Pancreas (tissue), 10 donors: ENCODE measurements at regions of chr1 and their contacts with region 1.

Region 1: GRCh38 chr1:55284852-55285251 is 69.7 kb upstream of the USP24 start:
- DNase-seq: peak in 1 of 6 donors; percentile 18
- ATAC-seq: peak in 3 of 4 donors; percentile 55 to 76 (median 70)
- H3K4me3 ChIP-seq: no peak overlapping the region
- H3K27ac ChIP-seq: no peak overlapping the region
- H3K4me1 ChIP-seq: no peaks in the 10 kb centered on the region
- H3K27me3 ChIP-seq: no peaks in the 10 kb centered on the region
- CTCF ChIP-seq: peak in 1 of 4 donors; percentile 23

Region 2: DNA sequence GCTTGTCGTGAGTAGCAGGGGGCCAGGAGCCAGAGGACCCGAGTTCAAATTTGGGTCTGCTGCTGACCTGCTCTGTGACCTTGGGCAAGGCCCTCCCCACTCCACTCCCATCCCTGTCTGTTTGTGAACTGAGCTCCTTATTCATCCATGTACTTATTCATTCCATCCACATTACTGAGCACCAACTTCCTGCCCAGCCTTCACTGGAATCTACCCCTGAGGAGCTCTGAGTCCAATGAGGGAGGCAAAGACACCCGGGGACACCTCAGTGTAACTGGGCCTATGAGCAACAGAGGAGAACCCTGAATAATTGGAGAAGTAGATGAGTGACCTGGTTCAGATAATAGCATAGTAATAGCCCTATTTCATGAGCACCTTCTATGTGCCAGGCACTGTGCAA is 277.2 kb before region 1 on chr1:
- intact Hi-C with region 1: no loop called
- DNase-seq: peak in 1 of 6 donors; percentile 12
- ATAC-seq: no peak
- H3K4me3 ChIP-seq: no peak overlapping the region
- H3K27ac ChIP-seq: no peak overlapping the region
- H3K4me1 ChIP-seq: no peaks in the 10 kb centered on the region
- H3K27me3 ChIP-seq: no peaks in the 10 kb centered on the region
- CTCF ChIP-seq: no peak

Region 3: GRCh38 chr1:56709269-56709880 is 1424.5 kb after region 1 on chr1:
- intact Hi-C with region 1: loop called in 1 of 3 experiments (anchors 10 kb)
- DNase-seq: no peak
- ATAC-seq: peak; percentile 68 to 88 (median 84)
- H3K4me3 ChIP-seq: no peak overlapping the region
- H3K27ac ChIP-seq: no peak overlapping the region
- H3K4me1 ChIP-seq: no peaks in the 10 kb centered on the region
- H3K27me3 ChIP-seq: no peaks in the 10 kb centered on the region
- CTCF ChIP-seq: peak; percentile 16 to 53 (median 32)